ENCODE measurements at regions of chr18 and their contacts with region 1.

Region 1: GRCh38 chr18:45191795-45192194 is 423.5 kb upstream of the SLC14A2 start:
- DNase-seq: no peak
- H3K4me3 ChIP-seq: no peak overlapping the region
- H3K27ac ChIP-seq: no peak overlapping the region
- H3K4me1 ChIP-seq: no peaks in the 10 kb centered on the region
- H3K27me3 ChIP-seq: no peaks in the 10 kb centered on the region
- CTCF ChIP-seq: no peak
- POLR2A ChIP-seq: no peak

Region 2: GRCh38 chr18:45039376-45039775 is 152.4 kb before region 1 on chr18:
- intact Hi-C with region 1: loop called (anchors 5 kb)
- DNase-seq: no peak
- H3K4me3 ChIP-seq: no peak overlapping the region
- H3K27ac ChIP-seq: no peak overlapping the region
- H3K4me1 ChIP-seq: no peaks in the 10 kb centered on the region
- H3K27me3 ChIP-seq: no peaks in the 10 kb centered on the region
- CTCF ChIP-seq: no peak
- POLR2A ChIP-seq: no peak

Region 3: DNA sequence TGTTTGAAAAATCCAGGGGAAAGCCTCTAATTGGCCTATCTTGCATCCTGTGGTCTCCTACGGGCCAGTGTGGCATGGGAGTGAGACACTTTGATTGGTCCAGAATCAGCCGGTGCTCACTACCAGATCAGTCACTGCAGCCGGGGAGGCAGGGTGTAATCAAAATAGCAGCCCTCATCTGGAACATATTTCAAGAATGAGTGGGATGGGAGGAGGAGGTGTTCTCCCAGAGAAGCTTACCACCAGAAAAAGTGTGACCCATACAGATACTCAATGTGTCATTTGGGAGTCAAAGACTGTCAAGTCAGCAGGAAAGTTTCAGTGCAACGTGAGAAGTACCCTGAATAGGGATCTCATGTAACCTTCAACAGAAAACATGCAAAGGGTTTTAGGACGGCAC is 29.6 kb after region 1 on chr18:
- intact Hi-C with region 1: no loop called
- DNase-seq: no peak
- H3K4me3 ChIP-seq: no peak overlapping the region
- H3K27ac ChIP-seq: no peak overlapping the region
- H3K4me1 ChIP-seq: no peaks in the 10 kb centered on the region
- H3K27me3 ChIP-seq: no peaks in the 10 kb centered on the region
- CTCF ChIP-seq: no peak
- POLR2A ChIP-seq: no peak

Region 4: DNA sequence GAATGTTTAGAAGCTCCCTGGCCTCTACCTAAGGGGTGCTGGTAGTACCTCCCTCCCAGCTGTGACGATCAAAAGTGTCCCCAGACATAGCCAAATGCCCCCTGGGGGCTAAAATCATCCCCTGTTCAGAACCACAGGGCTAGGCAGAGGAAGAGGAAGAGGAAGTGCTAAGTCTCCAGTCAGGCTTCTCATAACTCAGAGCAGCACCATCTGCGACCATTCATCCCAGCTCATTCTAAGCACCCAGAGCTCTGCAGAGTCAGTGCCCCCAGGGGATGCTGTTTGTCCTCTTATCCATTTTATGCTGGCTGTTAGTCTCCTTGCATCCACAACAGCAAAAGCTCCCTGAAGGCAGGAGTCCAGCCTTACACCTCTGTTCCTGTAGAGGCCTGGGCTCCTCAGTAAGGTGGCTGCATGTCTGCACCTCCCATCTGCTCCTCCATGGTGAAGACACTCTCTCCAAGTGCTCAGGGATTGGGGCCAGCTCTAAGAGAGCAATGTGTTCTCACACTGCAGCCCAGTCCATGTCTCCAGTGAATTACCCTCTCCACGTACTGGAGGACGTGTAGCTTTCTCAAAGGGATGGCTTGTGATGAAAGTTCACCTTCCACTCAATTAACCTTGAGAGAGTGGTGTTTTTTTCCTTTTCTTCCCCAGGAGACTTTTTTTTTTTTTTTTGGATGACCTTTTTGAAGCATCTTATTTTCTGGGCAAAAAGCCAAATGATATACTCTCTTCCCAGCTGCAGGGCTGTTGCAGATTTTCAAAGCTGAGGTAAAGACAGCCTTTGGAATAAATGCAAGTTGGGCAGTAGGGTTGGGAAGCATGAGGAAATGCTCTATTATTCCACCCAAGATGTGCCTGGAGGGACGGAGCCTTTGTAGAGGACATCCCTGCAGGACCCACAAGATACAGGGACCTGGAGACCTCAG is 264.6 kb after region 1 on chr18:
- intact Hi-C with region 1: no loop called
- DNase-seq: no peak
- H3K4me3 ChIP-seq: no peak overlapping the region
- H3K27ac ChIP-seq: no peak overlapping the region
- H3K4me1 ChIP-seq: no peaks in the 10 kb centered on the region
- H3K27me3 ChIP-seq: no peaks in the 10 kb centered on the region
- CTCF ChIP-seq: no peak
- POLR2A ChIP-seq: no peak